Tibial artery (tissue), 4 donors: ENCODE measurements at regions of chr12 and their contacts with region 1.

Region 1: GRCh38 chr12:93682846-93683261 is 5.7 kb downstream of the CRADD start:
- DNase-seq: no peak
- H3K4me3 ChIP-seq: no peak overlapping the region
- H3K27ac ChIP-seq: peak overlapping the region; percentile 14 to 38
- H3K4me1 ChIP-seq: peaks cover 0 to 40% (median 12%) of the 10 kb centered on the region in 4 donors
- H3K27me3 ChIP-seq: no peaks in the 10 kb centered on the region
- CTCF ChIP-seq: no peak

Region 2: DNA sequence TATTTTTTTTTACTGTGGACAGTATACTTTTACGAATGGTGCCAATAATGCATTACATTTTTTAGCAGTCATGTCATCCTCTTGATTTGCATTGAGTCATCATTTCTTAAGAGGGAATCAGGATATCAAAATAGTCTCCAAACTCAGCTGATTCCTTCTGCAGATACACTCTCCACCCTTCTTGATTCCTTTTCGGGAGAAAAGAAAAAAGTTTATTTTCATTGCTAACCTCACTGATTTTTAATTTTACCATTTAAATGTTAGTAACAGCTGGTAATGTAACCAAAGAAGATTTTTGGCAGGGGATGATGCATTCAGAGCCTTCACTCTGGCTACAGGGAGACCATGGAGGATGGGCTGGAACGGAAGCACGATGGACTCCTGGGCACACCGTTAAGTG is 168.0 kb before region 1 on chr12:
- intact Hi-C with region 1: no loop called
- DNase-seq: no peak
- H3K4me3 ChIP-seq: no peak overlapping the region
- H3K27ac ChIP-seq: no peak overlapping the region
- H3K4me1 ChIP-seq: no peaks in the 10 kb centered on the region
- H3K27me3 ChIP-seq: no peaks in the 10 kb centered on the region
- CTCF ChIP-seq: no peak

Region 3: GRCh38 chr12:93616584-93617101 is 66.2 kb before region 1 on chr12:
- intact Hi-C with region 1: no loop called
- DNase-seq: no peak
- H3K4me3 ChIP-seq: no peak overlapping the region
- H3K27ac ChIP-seq: no peak overlapping the region
- H3K4me1 ChIP-seq: peaks cover 0 to 1% (median under 1%) of the 10 kb centered on the region in 4 donors
- H3K27me3 ChIP-seq: no peaks in the 10 kb centered on the region
- CTCF ChIP-seq: no peak

Region 4: GRCh38 chr12:93748672-93749383 is 66.0 kb after region 1 on chr12:
- intact Hi-C with region 1: loop called (anchors 1 kb)
- DNase-seq: no peak
- H3K4me3 ChIP-seq: no peak overlapping the region
- H3K27ac ChIP-seq: no peak overlapping the region
- H3K4me1 ChIP-seq: peaks cover 0 to 9% (median 2%) of the 10 kb centered on the region in 4 donors
- H3K27me3 ChIP-seq: no peaks in the 10 kb centered on the region
- CTCF ChIP-seq: no peak

Region 5: DNA sequence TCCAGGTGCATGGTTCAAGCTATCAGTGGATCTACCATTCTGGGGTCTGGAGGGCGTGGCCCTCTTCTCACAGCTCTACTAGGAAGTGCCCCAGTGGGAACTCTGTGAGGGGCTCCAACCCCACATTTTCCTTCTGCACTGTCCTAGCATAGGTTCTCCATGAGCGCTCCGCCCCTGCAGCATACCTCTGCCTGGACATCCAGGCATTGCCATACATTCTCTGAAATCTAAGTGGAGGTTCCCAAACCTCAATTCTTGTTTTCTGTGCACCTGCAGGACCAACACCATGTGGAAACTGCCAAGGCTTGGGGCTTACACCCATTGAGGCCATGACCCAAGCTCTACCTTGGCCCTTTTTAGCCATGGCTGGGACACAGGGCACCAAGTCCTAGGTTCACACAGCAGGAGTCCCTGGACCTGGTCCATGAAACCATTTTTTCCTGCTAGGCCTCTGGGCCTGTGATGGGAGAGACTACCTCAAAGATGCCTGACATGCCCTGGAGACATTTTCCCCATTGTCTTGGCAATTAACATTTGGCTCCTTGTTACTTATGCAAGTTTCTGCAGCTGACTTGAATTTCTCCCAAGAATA is 71.1 kb after region 1 on chr12:
- intact Hi-C with region 1: loop called (anchors 1 kb)
- DNase-seq: no peak
- H3K4me3 ChIP-seq: no peak overlapping the region
- H3K27ac ChIP-seq: no peak overlapping the region
- H3K4me1 ChIP-seq: peaks cover 0 to 4% (median 2%) of the 10 kb centered on the region in 4 donors
- H3K27me3 ChIP-seq: no peaks in the 10 kb centered on the region
- CTCF ChIP-seq: no peak